ENCODE measurements at regions of chr3 and their contacts with region 1.

Region 1: GRCh38 chr3:149480325-149481017 is 6.0 kb downstream of the TM4SF4 start:
- DNase-seq: peak; percentile 92
- ATAC-seq: peak; percentile 96
- H3K4me3 ChIP-seq: no peak overlapping the region; a peak in 1 of 4 replicates
- H3K27ac ChIP-seq: peak overlapping the region; percentile 96
- H3K4me1 ChIP-seq: peaks cover 21% of the 10 kb centered on the region
- H3K27me3 ChIP-seq: no peaks in the 10 kb centered on the region
- CTCF ChIP-seq: peak; percentile 98

Region 2: GRCh38 chr3:149377408-149378377 is 102.8 kb before region 1 on chr3 and contains the start of gene TM4SF1:
- CTCF ChIA-PET with region 1: no interaction called
- POLR2A ChIA-PET with region 1: interaction called, 11 read pairs
- in situ Hi-C with region 1: no loop called
- intact Hi-C with region 1: no loop called
- DNase-seq: peak; percentile 98
- ATAC-seq: peak; percentile 85
- H3K4me3 ChIP-seq: peak within 1 kb of the TSS; percentile 88 to 97
- H3K27ac ChIP-seq: peak within 1 kb of the TSS; percentile 100
- H3K4me1 ChIP-seq: peaks cover 53% of the 10 kb centered on the region
- H3K27me3 ChIP-seq: no peaks in the 10 kb centered on the region
- CTCF ChIP-seq: no peak
- total RNA-seq, gene TM4SF1: 1,063 TPM

Region 3: DNA sequence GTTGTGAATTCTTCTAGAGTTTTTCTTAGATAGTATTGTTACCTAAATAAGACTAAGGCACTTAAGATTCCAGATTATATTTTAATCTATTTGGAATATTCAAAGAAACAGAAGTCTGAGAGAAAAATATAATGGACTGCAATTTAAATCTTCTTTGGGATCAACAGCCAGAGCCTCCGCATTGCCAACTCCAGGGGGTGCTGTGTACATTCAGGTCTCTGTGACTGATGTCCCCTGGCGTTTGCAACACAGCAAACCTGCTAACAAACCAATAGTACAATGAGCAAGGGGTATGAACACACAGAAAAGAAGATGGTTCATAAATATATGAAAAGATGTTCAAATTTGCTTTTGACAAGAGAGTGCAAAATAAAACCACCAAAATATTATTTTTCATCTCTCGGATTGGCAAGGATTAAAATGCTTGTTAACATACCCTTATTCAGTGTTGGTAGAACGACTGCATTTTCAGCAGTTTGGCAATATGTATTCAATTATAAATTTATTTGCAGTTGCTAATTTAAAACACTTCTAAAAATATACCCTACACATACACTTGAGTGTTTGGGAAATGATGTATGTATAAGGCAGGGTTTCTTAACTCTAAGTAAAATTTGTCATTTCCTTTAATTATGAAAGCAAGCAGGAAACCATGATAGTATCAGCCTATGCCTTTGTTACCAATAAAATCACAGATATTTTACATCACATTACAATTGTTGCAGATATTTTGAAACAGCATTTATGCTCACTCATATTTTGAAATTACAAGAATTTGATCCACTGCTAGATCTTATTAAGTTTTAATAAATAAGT is 86.9 kb before region 1 on chr3:
- CTCF ChIA-PET with region 1: no interaction called
- POLR2A ChIA-PET with region 1: no interaction called
- in situ Hi-C with region 1: no loop called
- intact Hi-C with region 1: loop called (anchors 1 kb)
- DNase-seq: no peak
- ATAC-seq: peak; percentile 84
- H3K4me3 ChIP-seq: no peak overlapping the region
- H3K27ac ChIP-seq: peak overlapping the region; percentile 99
- H3K4me1 ChIP-seq: peaks cover 52% of the 10 kb centered on the region
- H3K27me3 ChIP-seq: no peaks in the 10 kb centered on the region
- CTCF ChIP-seq: peak; percentile 97

Region 4: DNA sequence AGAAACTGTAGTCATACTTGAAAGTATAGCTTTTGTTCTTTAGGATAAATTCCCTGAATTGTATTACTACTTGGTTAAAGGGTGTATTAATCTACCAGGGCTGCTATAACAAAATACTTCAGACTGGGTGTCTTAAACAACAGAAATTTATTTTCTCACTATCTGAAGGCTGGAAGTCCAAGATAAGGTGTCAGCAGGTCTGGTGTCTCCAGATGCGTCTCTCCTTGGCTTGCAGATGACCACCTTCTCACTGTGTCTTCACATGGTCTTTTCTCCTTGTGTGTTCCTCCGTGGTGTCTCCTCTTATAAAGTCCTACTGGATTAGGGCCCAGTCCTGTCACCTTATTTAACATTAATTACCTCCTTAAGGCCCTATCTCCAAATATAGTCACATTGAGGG is 1638.7 kb after region 1 on chr3:
- CTCF ChIA-PET with region 1: interaction called, 10 read pairs
- POLR2A ChIA-PET with region 1: no interaction called
- in situ Hi-C with region 1: no loop called
- intact Hi-C with region 1: no loop called
- DNase-seq: no peak
- ATAC-seq: no peak
- H3K4me3 ChIP-seq: no peak overlapping the region
- H3K27ac ChIP-seq: no peak overlapping the region
- H3K4me1 ChIP-seq: no peaks in the 10 kb centered on the region
- H3K27me3 ChIP-seq: no peaks in the 10 kb centered on the region
- CTCF ChIP-seq: no peak

Measured in Panc1 (cell line).